Activated T-helper 2 cell treated with anti-CD3 and anti-CD28 coated beads, Interferon-gamma antibody, Interleukin-2, Interleukin-4, amounts not matched to agents 10 μg/mL and 5 μg/mL and 100 μg/mL, durations not matched to agents 14 hours and 24 hours and 36 hours (primary cell): ENCODE measurements at regions of chr1 and their contacts with region 1.

Region 1: GRCh38 chr1:150464422-150464826 is 22.8 kb upstream of the TARS2 start:
- DNase-seq: peak; percentile 53
- H3K4me3 Mint-ChIP-seq: no peak overlapping the region
- H3K27ac Mint-ChIP-seq: no peak overlapping the region
- H3K4me1 Mint-ChIP-seq: peaks cover 2% of the 10 kb centered on the region
- H3K27me3 Mint-ChIP-seq: no peaks in the 10 kb centered on the region

Region 2: GRCh38 chr1:150076066-150076465 is 388.4 kb before region 1 on chr1:
- intact Hi-C with region 1: no loop called
- DNase-seq: no peak
- H3K4me3 Mint-ChIP-seq: no peak overlapping the region
- H3K27ac Mint-ChIP-seq: no peak overlapping the region
- H3K4me1 Mint-ChIP-seq: peaks cover 10% of the 10 kb centered on the region
- H3K27me3 Mint-ChIP-seq: no peaks in the 10 kb centered on the region

Region 3: DNA sequence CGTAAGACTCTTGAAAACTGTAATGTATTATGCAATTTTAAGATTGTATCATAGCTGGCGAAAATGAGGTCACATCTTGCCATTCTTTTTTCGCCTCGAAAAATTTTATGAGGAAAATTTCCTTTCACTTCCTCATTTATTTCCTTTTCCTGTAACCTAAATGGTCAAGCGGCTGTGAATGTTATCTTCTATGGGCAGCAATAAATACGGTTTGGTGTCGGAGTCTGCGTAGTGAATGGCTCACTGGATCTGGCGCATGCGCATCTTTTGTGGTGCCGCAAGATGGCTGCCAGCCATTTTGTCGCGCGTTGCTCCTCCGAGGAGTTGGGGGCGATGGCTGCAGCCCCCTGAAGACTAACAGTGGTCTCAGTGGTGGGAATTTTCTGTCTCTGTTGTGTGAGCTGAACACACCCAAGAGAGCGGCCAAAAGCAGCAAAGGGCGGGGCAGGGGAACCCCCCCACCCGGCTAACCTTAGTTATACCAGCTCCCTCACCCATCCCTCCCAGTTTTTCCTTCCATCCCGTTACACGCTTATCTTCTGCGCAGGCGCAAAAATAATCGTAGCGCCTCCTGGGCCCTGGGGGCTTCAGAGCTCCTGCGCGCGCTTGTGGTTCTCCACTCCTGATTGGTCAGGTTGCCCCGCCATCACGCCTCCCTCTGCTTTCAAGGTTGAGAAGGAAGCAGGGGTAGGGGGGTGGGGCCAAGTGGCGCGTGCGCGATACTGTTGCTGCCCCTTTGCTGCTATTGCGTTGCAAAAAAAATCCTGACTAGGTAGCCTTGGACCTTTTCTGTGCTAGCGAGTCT is 100.8 kb before region 1 on chr1 and contains the start of gene RPRD2:
- intact Hi-C with region 1: no loop called
- DNase-seq: peak; percentile 99
- H3K4me3 Mint-ChIP-seq: peak within 1 kb of the TSS; percentile 93
- H3K27ac Mint-ChIP-seq: peak within 1 kb of the TSS; percentile 99
- H3K4me1 Mint-ChIP-seq: peaks cover 23% of the 10 kb centered on the region
- H3K27me3 Mint-ChIP-seq: no peaks in the 10 kb centered on the region
- total RNA-seq, gene RPRD2: 21.9 and 22.8 TPM in 2 replicates

Region 4: GRCh38 chr1:150532868-150533302 is 68.5 kb after region 1 on chr1:
- intact Hi-C with region 1: loop called (anchors 1 kb)
- DNase-seq: no peak
- H3K4me3 Mint-ChIP-seq: no peak overlapping the region
- H3K27ac Mint-ChIP-seq: no peak overlapping the region
- H3K4me1 Mint-ChIP-seq: peaks cover 6% of the 10 kb centered on the region
- H3K27me3 Mint-ChIP-seq: no peaks in the 10 kb centered on the region

Region 5: GRCh38 chr1:150789396-150789795 is 325.0 kb after region 1 on chr1:
- intact Hi-C with region 1: no loop called
- DNase-seq: no peak
- H3K4me3 Mint-ChIP-seq: no peak overlapping the region
- H3K27ac Mint-ChIP-seq: no peak overlapping the region
- H3K4me1 Mint-ChIP-seq: peaks cover 8% of the 10 kb centered on the region
- H3K27me3 Mint-ChIP-seq: peaks cover 7% of the 10 kb centered on the region